ENCODE measurements at regions of chr6 and their contacts with region 1.

Region 1: GRCh38 chr6:53348371-53349208 is at the start of gene ELOVL5:
- DNase-seq: peak; percentile 99
- total RNA-seq, gene ELOVL5: 37.6 TPM

Region 2: DNA sequence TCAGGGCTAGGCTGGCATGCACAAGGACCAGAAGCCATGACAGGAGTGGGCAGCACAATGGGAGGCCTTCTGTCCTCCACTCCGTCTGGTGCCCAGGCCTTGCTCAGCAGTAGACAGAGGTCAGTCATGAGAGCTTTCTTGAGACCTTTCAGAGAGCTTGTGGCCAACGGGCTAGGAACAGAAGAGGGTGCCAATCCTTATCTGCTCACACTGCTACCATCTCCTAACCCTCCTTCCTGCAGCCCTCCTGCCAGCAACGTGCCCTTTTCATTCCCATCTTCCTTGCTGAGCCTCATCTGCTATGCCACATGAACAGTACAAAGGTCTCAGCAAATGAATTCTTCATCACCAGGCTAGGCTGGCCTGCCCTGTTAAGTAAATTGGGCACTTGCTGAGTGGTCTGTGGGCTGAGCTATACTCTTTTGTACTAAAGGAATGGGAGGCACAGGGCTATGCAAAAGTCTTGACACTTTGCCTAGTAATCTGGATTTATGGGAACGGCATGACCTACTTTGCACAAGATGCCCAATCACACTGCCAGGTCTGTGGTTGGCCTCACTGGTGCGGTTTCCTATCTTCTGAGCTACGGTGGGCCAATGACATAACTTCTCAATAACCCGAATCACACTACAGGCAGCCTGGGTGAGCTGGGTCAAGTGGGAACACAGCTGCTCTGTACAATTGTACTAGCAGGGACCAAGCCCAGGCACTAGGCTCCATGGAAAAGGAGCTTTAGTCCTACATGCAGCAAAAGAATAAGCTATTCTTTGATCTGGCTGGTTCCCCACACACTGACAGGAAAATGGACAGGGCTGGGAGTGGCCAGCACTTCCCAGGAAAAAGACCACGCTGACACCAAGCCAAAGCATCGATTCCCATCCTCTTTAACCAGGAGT is 47.7 kb before region 1 on chr6:
- intact Hi-C with region 1: loop called (anchors 5 kb)
- DNase-seq: no peak

Region 3: DNA sequence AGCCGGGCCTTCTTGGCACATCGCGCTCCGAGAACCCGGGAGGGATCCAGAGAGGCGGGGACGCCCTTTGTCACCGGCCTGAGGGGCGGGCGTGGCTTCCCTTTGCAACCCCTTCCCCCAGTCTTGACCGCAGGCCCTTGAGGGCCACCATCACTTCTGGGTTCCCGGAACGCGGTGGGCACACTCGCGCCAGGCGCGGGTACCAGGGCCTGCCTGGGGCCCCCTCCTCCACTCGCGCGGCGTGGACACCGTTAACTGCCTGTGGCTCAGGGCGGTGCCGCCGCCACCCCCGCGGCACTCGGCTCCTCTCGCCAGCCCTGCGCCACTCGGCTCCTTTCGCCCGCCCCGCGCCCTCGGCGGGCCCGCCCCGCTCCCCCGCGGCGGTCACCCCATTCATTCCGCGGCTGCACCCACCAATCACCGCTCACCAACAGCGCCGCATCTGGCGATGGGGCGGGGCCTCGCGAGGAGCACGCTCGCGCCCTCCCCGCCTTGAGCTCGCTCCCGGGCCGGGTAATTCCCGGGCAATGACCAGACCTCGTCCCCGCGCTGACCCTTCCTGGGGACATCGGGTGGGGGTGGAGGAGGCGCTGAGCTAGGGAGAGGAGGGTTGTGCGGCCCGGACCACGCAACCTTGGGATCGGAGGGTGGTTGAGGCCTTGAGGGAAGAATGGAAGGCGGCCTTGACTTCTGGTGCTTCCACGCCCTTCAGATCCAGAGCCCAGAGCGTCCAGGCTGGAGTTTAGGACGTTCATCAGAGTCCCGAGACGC is 10.7 kb after region 1 on chr6:
- intact Hi-C with region 1: loop called (anchors 1 kb)
- DNase-seq: peak; percentile 99

Region 4: DNA sequence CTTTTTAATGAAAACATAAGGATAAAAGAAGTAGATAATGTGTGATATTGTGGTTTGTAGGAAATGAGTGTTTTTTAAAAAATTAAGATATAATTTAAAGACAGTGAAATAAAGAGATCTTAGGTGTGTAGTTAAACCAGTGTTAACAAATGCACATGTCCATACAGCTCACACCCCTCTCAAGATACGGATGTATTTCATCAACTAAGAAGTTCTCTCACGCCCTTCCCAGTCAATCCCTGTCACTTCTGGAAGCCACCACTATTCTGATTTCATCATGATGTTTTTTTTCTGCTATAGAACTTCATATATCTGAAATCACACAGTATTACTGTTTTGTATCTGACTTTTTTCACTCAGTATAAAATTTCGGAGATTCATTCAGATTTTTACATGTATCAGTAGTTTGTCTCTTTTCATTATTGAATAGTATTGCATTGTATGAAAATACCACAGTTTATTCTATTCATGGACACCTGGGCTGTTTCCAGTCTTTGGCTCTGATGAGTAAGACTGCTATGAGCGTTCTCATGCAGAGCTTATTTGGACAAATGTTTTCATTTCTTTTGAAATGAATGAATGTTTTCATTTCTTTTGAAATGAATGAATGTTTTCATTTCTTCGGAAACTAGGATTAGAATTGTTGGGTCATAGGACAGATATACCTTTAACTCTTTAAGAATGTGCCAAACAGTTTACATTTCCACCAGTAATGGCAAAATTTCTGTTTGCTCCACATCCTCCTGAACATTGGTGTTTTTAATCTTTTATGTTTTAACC is 49.8 kb after region 1 on chr6:
- intact Hi-C with region 1: no loop called
- DNase-seq: no peak